ENCODE measurements at regions of chr15 and their contacts with region 1.

Region 1: GRCh38 chr15:60397772-60398445 is at the start of gene ANXA2:
- DNase-seq: peak; percentile 90
- H3K4me3 Mint-ChIP-seq: peak within 1 kb of the TSS; percentile 98
- H3K27ac Mint-ChIP-seq: peak within 1 kb of the TSS; percentile 91
- H3K4me1 Mint-ChIP-seq: peaks cover 55% of the 10 kb centered on the region
- H3K27me3 Mint-ChIP-seq: no peaks in the 10 kb centered on the region
- CTCF ChIP-seq: no peak
- total RNA-seq, gene ANXA2: 3,317 and 3,451 TPM in 2 replicates

Region 2: GRCh38 chr15:60172143-60172542 is 225.8 kb before region 1 on chr15:
- CTCF ChIA-PET with region 1: no interaction called
- POLR2A ChIA-PET with region 1: no interaction called
- intact Hi-C with region 1: no loop called
- DNase-seq: no peak
- H3K4me3 Mint-ChIP-seq: no peak overlapping the region
- H3K27ac Mint-ChIP-seq: no peak overlapping the region
- H3K4me1 Mint-ChIP-seq: no peaks in the 10 kb centered on the region
- H3K27me3 Mint-ChIP-seq: no peaks in the 10 kb centered on the region
- CTCF ChIP-seq: no peak

Region 3: GRCh38 chr15:60343221-60343970 is 54.5 kb before region 1 on chr15:
- CTCF ChIA-PET with region 1: no interaction called
- POLR2A ChIA-PET with region 1: interaction called, 11 read pairs
- intact Hi-C with region 1: no loop called
- DNase-seq: no peak
- H3K4me3 Mint-ChIP-seq: no peak overlapping the region
- H3K27ac Mint-ChIP-seq: peak overlapping the region; percentile 63
- H3K4me1 Mint-ChIP-seq: peaks cover 30% of the 10 kb centered on the region
- H3K27me3 Mint-ChIP-seq: no peaks in the 10 kb centered on the region
- CTCF ChIP-seq: no peak

Region 4: DNA sequence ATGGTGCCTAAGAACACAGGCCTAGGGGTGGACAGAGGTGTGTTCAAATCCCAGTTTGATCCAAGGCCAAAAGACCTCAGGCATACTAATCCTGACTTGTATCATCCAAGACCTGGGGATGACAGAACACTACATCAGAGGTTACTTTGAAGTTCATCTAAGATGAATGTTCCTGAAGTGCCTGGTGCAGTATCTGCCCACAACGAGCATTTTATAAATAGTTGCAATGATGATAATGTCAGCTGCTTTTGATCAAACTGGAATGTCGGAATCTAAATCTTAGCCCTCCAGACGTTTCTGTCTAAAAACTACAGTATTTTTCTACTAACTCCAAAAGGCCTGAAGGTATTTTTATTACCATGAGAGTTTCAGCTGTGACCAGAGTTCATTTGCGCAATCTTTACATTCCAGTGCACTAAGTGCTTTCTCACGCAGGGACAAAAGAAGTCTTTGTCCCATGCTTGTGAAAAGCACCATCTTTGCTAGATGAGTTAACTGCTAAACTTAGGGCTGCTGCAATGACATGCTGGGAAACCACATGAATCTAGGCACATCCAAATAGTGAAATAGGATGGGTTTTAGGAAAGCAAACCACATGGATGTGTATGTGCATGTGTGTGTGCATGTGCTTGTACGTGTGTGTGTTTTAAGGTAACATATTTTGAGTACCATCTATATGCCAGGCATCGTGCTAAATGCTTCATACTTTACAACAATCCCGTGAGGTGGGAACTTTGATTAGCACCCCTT is 18.2 kb before region 1 on chr15:
- CTCF ChIA-PET with region 1: interaction called, 7 read pairs
- POLR2A ChIA-PET with region 1: interaction called, 461 read pairs
- intact Hi-C with region 1: loop called (anchors 1 kb)
- DNase-seq: peak; percentile 93
- H3K4me3 Mint-ChIP-seq: peak overlapping the region; percentile 31
- H3K27ac Mint-ChIP-seq: peak overlapping the region; percentile 57
- H3K4me1 Mint-ChIP-seq: peaks cover 62% of the 10 kb centered on the region
- H3K27me3 Mint-ChIP-seq: no peaks in the 10 kb centered on the region
- CTCF ChIP-seq: no peak

Region 5: GRCh38 chr15:60423537-60423936 is 25.6 kb after region 1 on chr15:
- CTCF ChIA-PET with region 1: interaction called, 4 read pairs
- POLR2A ChIA-PET with region 1: interaction called, 376 read pairs
- intact Hi-C with region 1: loop called (anchors 1 kb)
- DNase-seq: peak; percentile 66
- H3K4me3 Mint-ChIP-seq: peak overlapping the region; percentile 50
- H3K27ac Mint-ChIP-seq: peak overlapping the region; percentile 92
- H3K4me1 Mint-ChIP-seq: peaks cover 35% of the 10 kb centered on the region
- H3K27me3 Mint-ChIP-seq: no peaks in the 10 kb centered on the region
- CTCF ChIP-seq: no peak

Region 6: GRCh38 chr15:60478566-60479360 is 80.9 kb after region 1 on chr15 and contains the start of gene ICE2:
- CTCF ChIA-PET with region 1: interaction called, 4 read pairs
- POLR2A ChIA-PET with region 1: interaction called, 17 read pairs
- intact Hi-C with region 1: no loop called
- DNase-seq: peak; percentile 93
- H3K4me3 Mint-ChIP-seq: peak within 1 kb of the TSS; percentile 90
- H3K27ac Mint-ChIP-seq: peak within 1 kb of the TSS; percentile 96
- H3K4me1 Mint-ChIP-seq: peaks cover 32% of the 10 kb centered on the region
- H3K27me3 Mint-ChIP-seq: no peaks in the 10 kb centered on the region
- CTCF ChIP-seq: no peak
- total RNA-seq, gene ICE2: 55.1 and 57.9 TPM in 2 replicates

Region 7: DNA sequence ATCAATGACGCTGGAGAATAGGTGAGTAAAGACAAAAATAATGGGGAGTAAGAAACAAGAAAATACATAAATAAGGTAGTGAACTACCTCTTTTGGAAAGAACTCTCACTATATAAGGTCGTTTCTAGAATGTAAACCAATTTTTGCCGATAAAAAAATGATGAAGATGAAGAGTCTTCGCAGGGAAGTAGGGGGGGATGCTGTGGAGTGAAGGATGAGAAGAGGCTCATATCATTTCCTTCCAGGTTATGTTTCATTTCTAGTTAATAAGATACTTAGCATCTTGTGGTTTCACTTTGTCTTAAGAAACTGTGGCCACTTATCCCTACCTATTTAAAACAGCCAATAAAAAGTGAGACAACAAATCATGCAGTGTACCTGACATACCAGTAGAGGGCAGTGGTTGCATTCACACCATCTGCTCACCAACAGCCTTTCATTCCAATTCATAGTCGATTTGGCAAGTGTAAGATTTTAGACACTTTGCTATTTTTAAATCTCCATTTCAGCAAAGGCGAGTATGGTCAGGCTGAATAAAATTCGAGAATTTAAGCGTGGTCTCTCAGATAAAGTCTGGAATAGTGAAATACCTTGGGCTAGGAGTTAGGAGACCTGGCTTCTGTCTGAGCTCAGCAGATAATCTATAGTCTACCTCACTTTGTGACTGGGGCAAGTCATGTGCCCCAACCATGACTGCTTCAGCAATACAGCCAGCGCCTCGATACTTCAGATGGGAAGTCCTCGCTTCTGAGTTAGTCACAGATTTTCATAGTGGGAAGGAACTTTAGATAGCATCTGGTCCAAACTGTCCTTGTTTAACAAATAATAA is 109.9 kb after region 1 on chr15:
- CTCF ChIA-PET with region 1: no interaction called
- POLR2A ChIA-PET with region 1: no interaction called
- intact Hi-C with region 1: no loop called
- DNase-seq: peak; percentile 76
- H3K4me3 Mint-ChIP-seq: no peak overlapping the region
- H3K27ac Mint-ChIP-seq: no peak overlapping the region
- H3K4me1 Mint-ChIP-seq: no peaks in the 10 kb centered on the region
- H3K27me3 Mint-ChIP-seq: no peaks in the 10 kb centered on the region
- CTCF ChIP-seq: peak; percentile 87

Region 8: DNA sequence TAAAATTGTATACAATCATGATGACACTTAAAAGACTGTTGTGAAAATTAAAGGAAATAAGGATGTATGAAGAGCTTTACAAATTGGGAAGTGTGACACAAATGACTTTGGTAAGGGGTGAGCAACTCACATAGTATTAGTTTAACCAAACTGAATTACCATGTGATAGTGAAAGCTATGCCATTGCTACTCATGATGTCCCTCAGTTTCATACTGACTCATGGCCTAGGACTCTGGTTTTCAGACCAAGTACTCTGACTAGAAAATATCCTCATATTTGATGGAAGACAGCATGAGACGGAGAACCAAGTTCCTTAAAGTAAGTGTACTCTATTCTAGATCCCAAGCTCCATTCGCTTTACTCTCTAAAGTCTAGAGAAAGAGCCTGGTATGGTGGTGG is 284.2 kb after region 1 on chr15:
- CTCF ChIA-PET with region 1: no interaction called
- POLR2A ChIA-PET with region 1: no interaction called
- intact Hi-C with region 1: no loop called
- DNase-seq: no peak
- H3K4me3 Mint-ChIP-seq: no peak overlapping the region
- H3K27ac Mint-ChIP-seq: no peak overlapping the region
- H3K4me1 Mint-ChIP-seq: no peaks in the 10 kb centered on the region
- H3K27me3 Mint-ChIP-seq: no peaks in the 10 kb centered on the region
- CTCF ChIP-seq: no peak